Activated T-helper 2 cell treated with anti-CD3 and anti-CD28 coated beads, Interferon-gamma antibody, Interleukin-2, Interleukin-4, amounts not matched to agents 10 μg/mL and 5 μg/mL and 100 μg/mL, durations not matched to agents 14 hours and 24 hours and 36 hours (primary cell): ENCODE measurements at regions of chr16 and their contacts with region 1.

Region 1: GRCh38 chr16:67109407-67110135 is at the start of gene PHAF1:
- DNase-seq: peak; percentile 94
- H3K4me3 Mint-ChIP-seq: peak within 1 kb of the TSS; percentile 94
- H3K27ac Mint-ChIP-seq: peak within 1 kb of the TSS; percentile 72
- H3K4me1 Mint-ChIP-seq: peaks cover 18% of the 10 kb centered on the region
- H3K27me3 Mint-ChIP-seq: no peaks in the 10 kb centered on the region
- total RNA-seq, gene PHAF1: 17.4 and 17.8 TPM in 2 replicates

Region 2: DNA sequence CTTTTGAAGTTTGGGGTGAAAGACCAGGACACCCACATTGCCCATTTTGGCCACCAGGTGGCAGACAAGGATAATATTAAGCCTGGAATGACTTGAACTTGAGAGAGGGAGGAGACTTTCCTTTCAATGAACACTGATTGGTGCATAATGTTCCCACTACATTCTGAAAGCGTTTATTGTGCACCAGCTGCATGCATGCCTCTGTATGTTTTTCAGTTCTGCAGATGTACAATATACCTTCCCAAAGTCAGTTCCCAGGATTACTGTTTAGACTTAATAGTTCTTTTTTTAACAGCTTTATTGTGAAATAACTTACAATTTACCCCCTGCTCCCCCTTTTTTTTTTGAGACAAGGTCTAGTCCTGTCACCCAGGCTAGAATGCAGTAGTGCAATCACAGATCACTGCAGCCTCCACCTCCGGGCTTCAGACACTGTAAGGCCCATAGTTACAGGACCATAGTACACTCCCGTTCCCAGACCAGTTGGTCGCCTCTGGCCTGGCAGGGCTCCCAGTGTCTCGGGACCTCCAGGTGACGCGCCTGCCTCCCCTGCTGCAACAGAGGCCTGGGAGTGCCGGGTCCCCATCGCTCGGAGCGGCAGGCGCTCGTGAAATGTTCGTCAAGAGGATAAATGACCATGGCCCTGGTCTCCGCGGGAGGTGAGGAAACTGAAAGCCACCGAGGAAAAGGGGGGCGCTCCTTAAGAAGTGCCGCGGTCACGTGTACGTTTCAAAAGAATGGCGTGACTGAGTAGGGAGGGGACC is 162.1 kb before region 1 on chr16:
- intact Hi-C with region 1: loop called (anchors 5 kb)
- DNase-seq: peak; percentile 75
- H3K4me3 Mint-ChIP-seq: peak overlapping the region; percentile 78
- H3K27ac Mint-ChIP-seq: no peak overlapping the region
- H3K4me1 Mint-ChIP-seq: peaks cover 20% of the 10 kb centered on the region
- H3K27me3 Mint-ChIP-seq: peaks cover 33% of the 10 kb centered on the region